Caco-2 (cell line): ENCODE measurements at regions of chr12 and their contacts with region 1.

Region 1: DNA sequence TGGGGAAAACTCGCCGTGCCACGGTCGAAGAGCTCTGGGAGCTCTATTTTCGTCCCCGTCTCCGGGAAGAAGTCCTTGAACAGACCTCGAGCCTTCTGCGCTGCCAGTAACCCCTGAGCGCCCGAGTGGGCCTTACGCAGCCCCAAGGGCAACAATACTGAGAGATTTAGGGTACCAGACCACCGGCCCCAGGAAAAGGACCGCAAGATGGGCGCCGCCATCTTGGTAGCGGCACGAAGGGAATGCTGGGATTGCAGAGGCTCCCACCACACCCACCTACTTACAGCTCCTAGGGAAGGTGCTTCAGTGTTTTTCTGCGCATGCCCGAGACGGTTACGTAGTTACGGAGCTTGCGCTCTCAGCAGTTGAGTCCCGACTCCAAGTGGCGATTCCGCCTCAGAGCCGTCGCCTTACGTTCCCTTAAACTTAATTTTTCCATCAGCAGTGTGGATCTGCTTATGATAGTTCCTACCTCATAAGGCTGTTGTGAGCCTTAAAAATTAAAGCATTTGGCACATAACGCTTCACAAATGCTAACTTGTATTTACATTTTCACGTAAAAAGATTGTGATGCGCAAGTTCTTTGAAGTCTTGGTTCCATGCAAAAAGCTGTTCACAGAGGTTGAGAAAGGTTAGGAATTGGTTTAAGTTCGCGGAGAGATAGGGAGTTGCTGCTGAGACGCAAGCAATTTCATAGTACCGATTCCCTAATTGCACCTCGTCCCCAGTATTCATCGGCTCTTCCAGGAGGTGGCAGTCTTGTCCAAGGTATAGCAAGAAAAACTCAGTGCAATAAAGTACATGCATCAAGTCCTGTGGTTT is at the start of gene YARS2:
- DNase-seq: peak; percentile 97 to 99
- H3K4me3 ChIP-seq: peak within 1 kb of the TSS; percentile 59
- H3K4me3 Mint-ChIP-seq: peak within 1 kb of the TSS; percentile 87
- H3K27ac Mint-ChIP-seq: peak within 1 kb of the TSS; percentile 94
- H3K4me1 ChIP-seq: peaks cover 16% of the 10 kb centered on the region
- H3K4me1 Mint-ChIP-seq: peaks cover 9% of the 10 kb centered on the region
- H3K27me3 ChIP-seq: no peaks in the 10 kb centered on the region
- H3K27me3 Mint-ChIP-seq: peaks cover 5% of the 10 kb centered on the region
- CTCF ChIP-seq: peak; percentile 88 to 95
- total RNA-seq, gene YARS2: 48.7 and 56.6 TPM in 2 replicates

Region 2: DNA sequence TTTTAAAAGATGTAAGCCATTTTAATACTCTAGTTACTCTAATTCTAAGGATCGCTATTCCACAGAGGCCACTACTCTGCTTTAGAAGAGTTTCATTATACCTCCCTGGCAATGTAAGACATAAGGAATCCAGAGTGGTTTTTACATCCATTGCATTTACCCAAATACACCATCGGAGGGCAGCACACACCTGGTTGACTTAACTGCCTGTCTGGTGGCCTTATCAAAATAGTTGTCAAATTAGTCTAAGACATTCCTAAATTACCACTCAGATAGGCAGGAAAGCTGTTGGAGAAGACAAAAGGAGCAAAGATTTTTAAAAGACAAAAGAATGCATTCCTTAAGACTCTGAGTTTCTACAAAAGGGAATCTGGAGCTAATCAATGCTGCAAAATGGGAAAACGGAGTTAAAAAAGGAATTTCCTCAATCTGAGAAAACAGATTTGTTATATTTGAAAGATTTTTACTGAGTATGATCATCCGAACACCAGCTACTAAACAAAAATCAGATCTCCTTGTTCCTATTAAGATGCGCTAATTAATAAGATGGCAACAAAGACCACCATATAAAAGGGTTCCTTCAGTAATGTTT is 390.3 kb before region 1 on chr12:
- CTCF ChIA-PET with region 1: interaction called, 5 read pairs
- POLR2A ChIA-PET with region 1: no interaction called
- intact Hi-C with region 1: loop called (anchors 1 kb)
- DNase-seq: peak; percentile 75 to 79
- H3K4me3 ChIP-seq: no peak overlapping the region
- H3K4me3 Mint-ChIP-seq: no peak overlapping the region
- H3K27ac Mint-ChIP-seq: no peak overlapping the region
- H3K4me1 ChIP-seq: peaks cover 13% of the 10 kb centered on the region
- H3K4me1 Mint-ChIP-seq: peaks cover 15% of the 10 kb centered on the region
- H3K27me3 ChIP-seq: no peaks in the 10 kb centered on the region
- H3K27me3 Mint-ChIP-seq: no peaks in the 10 kb centered on the region
- CTCF ChIP-seq: peak; percentile 82 to 98

Region 3: GRCh38 chr12:32679091-32679919 is 76.6 kb before region 1 on chr12 and contains the start of gene DNM1L:
- CTCF ChIA-PET with region 1: interaction called, 4 read pairs
- POLR2A ChIA-PET with region 1: interaction called, 4 read pairs
- intact Hi-C with region 1: loop called (anchors 1 kb)
- DNase-seq: peak; percentile 99
- H3K4me3 ChIP-seq: peak within 1 kb of the TSS; percentile 86
- H3K4me3 Mint-ChIP-seq: peak within 1 kb of the TSS; percentile 97
- H3K27ac Mint-ChIP-seq: peak within 1 kb of the TSS; percentile 95
- H3K4me1 ChIP-seq: peaks cover 22% of the 10 kb centered on the region
- H3K4me1 Mint-ChIP-seq: peaks cover 19% of the 10 kb centered on the region
- H3K27me3 ChIP-seq: no peaks in the 10 kb centered on the region
- H3K27me3 Mint-ChIP-seq: no peaks in the 10 kb centered on the region
- CTCF ChIP-seq: peak in 1 of 2 experiments; percentile 18
- total RNA-seq, gene DNM1L: 136 and 137 TPM in 2 replicates

Region 4: GRCh38 chr12:32843528-32844095 is 87.7 kb after region 1 on chr12:
- CTCF ChIA-PET with region 1: interaction called, 3 read pairs
- POLR2A ChIA-PET with region 1: no interaction called
- intact Hi-C with region 1: loop called (anchors 5 kb)
- DNase-seq: no peak
- H3K4me3 ChIP-seq: no peak overlapping the region
- H3K4me3 Mint-ChIP-seq: no peak overlapping the region
- H3K27ac Mint-ChIP-seq: peak overlapping the region; percentile 21
- H3K4me1 ChIP-seq: peaks cover 18% of the 10 kb centered on the region; the same call in 1 of the 2 replicates
- H3K4me1 Mint-ChIP-seq: peaks cover 13% of the 10 kb centered on the region
- H3K27me3 ChIP-seq: no peaks in the 10 kb centered on the region
- H3K27me3 Mint-ChIP-seq: no peaks in the 10 kb centered on the region
- CTCF ChIP-seq: no peak

Region 5: GRCh38 chr12:32906407-32907165 is 150.7 kb after region 1 on chr12:
- CTCF ChIA-PET with region 1: interaction called, 13 read pairs
- POLR2A ChIA-PET with region 1: interaction called, 5 read pairs
- intact Hi-C with region 1: no loop called
- DNase-seq: no peak
- H3K4me3 ChIP-seq: no peak overlapping the region
- H3K4me3 Mint-ChIP-seq: no peak overlapping the region
- H3K27ac Mint-ChIP-seq: no peak overlapping the region
- H3K4me1 ChIP-seq: peaks cover 68% of the 10 kb centered on the region
- H3K4me1 Mint-ChIP-seq: peaks cover 56% of the 10 kb centered on the region
- H3K27me3 ChIP-seq: no peaks in the 10 kb centered on the region
- H3K27me3 Mint-ChIP-seq: no peaks in the 10 kb centered on the region
- CTCF ChIP-seq: no peak

Region 6: DNA sequence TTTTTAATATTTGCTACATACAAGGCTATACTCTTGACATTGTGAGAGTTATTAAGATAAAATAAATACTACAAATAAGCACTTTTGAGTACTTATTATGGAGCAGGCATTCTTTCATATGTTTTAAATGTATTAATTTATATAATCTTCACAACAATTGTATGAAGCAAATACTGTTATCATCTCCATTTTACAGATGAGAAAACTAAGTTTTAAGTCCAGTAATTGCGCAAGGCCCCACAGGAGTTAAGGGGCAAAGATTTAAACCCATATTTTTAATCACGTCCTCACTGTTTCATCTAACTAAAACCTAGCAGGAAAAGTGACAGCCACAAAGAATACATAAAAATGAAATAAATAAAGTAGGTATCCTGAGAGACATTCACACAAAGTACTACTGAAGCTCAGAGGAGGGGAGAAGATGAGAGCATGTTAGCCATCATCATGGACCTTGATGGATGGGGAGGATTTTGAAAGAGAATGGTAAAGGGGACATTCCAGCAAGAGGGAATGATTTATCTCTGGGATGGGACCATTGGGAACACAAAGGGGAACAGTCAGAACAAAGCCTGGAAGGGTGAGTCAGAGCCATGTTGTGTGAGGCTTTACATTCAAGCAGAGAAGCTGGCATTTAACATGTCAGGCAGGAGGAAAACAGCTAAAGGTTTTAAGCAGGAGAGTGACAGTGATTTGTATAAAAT is 509.0 kb after region 1 on chr12:
- CTCF ChIA-PET with region 1: no interaction called
- POLR2A ChIA-PET with region 1: interaction called, 6 read pairs
- intact Hi-C with region 1: loop called (anchors 5 kb)
- DNase-seq: no peak
- H3K4me3 ChIP-seq: no peak overlapping the region
- H3K4me3 Mint-ChIP-seq: no peak overlapping the region
- H3K27ac Mint-ChIP-seq: peak overlapping the region; percentile 26
- H3K4me1 ChIP-seq: peaks cover 18% of the 10 kb centered on the region
- H3K4me1 Mint-ChIP-seq: peaks cover 34% of the 10 kb centered on the region
- H3K27me3 ChIP-seq: no peaks in the 10 kb centered on the region
- H3K27me3 Mint-ChIP-seq: no peaks in the 10 kb centered on the region
- CTCF ChIP-seq: no peak

Region 7: GRCh38 chr12:33942172-33942571 is 1186.3 kb after region 1 on chr12:
- CTCF ChIA-PET with region 1: no interaction called
- POLR2A ChIA-PET with region 1: no interaction called
- intact Hi-C with region 1: loop called (anchors 5 kb)
- DNase-seq: no peak
- H3K4me3 ChIP-seq: no peak overlapping the region
- H3K4me3 Mint-ChIP-seq: no peak overlapping the region
- H3K27ac Mint-ChIP-seq: no peak overlapping the region
- H3K4me1 ChIP-seq: peaks cover 23% of the 10 kb centered on the region
- H3K4me1 Mint-ChIP-seq: peaks cover 11% of the 10 kb centered on the region
- H3K27me3 ChIP-seq: no peaks in the 10 kb centered on the region
- H3K27me3 Mint-ChIP-seq: no peaks in the 10 kb centered on the region
- CTCF ChIP-seq: peak; percentile 57 to 62